ENCODE measurements at regions of chr7 and their contacts with region 1.

Region 1: DNA sequence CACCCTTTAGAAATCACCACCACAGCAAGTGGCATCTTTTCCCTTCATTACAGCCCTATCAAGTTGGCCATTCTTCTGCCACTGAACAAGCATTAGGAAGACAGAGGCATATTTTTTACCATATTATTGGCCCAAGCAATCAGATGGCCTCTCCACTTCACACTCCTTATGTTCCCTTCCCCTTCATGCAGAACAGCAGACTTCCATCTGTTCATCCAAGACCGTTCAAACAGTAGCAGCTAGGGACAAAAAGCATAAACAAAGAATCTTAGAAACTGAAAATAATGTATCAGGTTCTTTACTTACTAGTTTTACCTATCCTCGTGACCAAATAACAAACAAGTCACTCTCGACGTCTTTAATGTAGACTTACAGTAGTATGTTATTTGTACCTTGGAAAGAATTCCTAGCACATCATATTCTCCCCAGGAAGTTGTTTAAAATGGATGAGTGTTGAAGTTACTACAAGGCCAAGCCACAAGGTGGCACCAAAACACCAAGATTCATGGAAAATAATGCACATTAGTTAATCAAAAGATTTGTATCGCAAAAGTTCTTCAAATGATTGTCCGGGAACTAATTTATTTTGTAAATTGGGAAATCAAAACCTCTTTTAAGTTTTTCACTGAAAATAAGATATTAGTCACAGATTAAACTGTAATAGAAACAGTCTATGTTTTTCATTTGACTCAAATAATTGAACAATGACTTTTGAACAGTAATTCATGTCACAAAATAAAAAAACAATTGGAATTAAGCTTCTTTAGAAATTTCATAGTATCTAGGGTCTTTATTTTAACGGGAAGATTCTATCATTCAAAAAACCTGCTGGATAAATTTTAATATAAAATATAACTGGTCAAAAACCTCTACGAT is 112.1 kb downstream of the VPS41 start:
- DNase-seq: peak; percentile 65
- ATAC-seq: no peak
- H3K4me3 Mint-ChIP-seq: no peak overlapping the region
- H3K27ac Mint-ChIP-seq: no peak overlapping the region
- H3K4me1 Mint-ChIP-seq: no peaks in the 10 kb centered on the region
- H3K27me3 Mint-ChIP-seq: no peaks in the 10 kb centered on the region

Region 2: GRCh38 chr7:38558761-38559345 is 238.0 kb before region 1 on chr7:
- CTCF ChIA-PET with region 1: no interaction called
- POLR2A ChIA-PET with region 1: no interaction called
- intact Hi-C with region 1: no loop called
- DNase-seq: no peak
- ATAC-seq: no peak
- H3K4me3 Mint-ChIP-seq: no peak overlapping the region
- H3K27ac Mint-ChIP-seq: no peak overlapping the region
- H3K4me1 Mint-ChIP-seq: no peaks in the 10 kb centered on the region
- H3K27me3 Mint-ChIP-seq: peaks cover 2% of the 10 kb centered on the region

Region 3: GRCh38 chr7:39137480-39137879 is 340.6 kb after region 1 on chr7:
- CTCF ChIA-PET with region 1: no interaction called
- POLR2A ChIA-PET with region 1: no interaction called
- intact Hi-C with region 1: loop called in 1 of 2 experiments (anchors 5 kb)
- DNase-seq: no peak
- ATAC-seq: no peak
- H3K4me3 Mint-ChIP-seq: no peak overlapping the region
- H3K27ac Mint-ChIP-seq: no peak overlapping the region
- H3K4me1 Mint-ChIP-seq: no peaks in the 10 kb centered on the region
- H3K27me3 Mint-ChIP-seq: peaks cover 4% of the 10 kb centered on the region

Region 4: DNA sequence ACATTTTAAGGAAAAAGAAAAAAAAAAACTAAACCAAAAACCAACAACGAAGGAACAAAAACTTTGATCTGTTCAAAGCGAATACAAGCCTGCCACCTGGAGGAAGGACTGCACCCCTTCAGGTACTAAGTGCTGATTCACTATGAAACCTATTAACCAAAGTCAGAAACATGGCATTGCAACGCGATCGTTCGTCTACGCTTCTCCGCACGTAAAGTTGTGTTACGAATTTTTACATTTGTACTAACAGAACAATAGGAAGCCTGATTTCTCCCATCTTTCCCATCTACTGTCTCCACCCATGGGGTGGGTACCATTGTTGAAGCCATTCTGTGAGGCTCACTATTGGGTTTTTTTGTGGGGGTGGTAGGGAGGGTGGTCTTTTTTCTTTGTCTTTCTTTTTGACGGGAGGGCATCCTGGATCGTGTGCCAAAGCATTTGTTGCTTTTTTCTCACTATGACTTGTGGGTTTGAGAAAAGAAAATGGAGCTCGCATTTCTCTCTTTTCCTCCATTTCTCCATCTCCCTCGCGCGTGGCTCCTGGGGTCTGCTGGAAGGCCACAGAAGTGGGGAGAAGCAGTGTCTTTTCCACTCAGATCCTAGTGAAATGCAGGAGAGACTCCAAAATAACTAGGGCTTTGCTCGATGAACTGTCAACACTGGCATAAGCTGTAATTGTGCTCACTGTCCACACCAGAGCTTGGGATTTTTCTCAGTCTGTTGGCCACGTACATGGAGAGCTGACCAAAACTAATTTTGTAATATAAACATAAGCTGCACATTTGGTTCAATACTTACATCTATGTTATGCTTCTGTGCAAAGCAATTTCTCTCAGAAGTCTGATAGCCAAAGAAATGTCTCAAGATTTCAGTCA is 668.4 kb after region 1 on chr7:
- CTCF ChIA-PET with region 1: interaction called, 4 read pairs
- POLR2A ChIA-PET with region 1: no interaction called
- intact Hi-C with region 1: loop called (anchors 1 to 2 kb)
- DNase-seq: peak; percentile 68
- ATAC-seq: peak; percentile 86
- H3K4me3 Mint-ChIP-seq: no peak overlapping the region
- H3K27ac Mint-ChIP-seq: no peak overlapping the region
- H3K4me1 Mint-ChIP-seq: peaks cover 2% of the 10 kb centered on the region
- H3K27me3 Mint-ChIP-seq: peaks cover 7% of the 10 kb centered on the region

Region 5: GRCh38 chr7:39517240-39517639 is 720.4 kb after region 1 on chr7:
- CTCF ChIA-PET with region 1: no interaction called
- POLR2A ChIA-PET with region 1: no interaction called
- intact Hi-C with region 1: loop called (anchors 1 kb)
- DNase-seq: no peak
- ATAC-seq: no peak
- H3K4me3 Mint-ChIP-seq: no peak overlapping the region
- H3K27ac Mint-ChIP-seq: no peak overlapping the region
- H3K4me1 Mint-ChIP-seq: no peaks in the 10 kb centered on the region
- H3K27me3 Mint-ChIP-seq: peaks cover 1% of the 10 kb centered on the region

Measured in activated CD4-positive, alpha-beta T cell treated with anti-CD3 and anti-CD28 coated beads for 36 hours (primary cell).